ENCODE measurements at regions of chr15 and their contacts with region 1.

Region 1: DNA sequence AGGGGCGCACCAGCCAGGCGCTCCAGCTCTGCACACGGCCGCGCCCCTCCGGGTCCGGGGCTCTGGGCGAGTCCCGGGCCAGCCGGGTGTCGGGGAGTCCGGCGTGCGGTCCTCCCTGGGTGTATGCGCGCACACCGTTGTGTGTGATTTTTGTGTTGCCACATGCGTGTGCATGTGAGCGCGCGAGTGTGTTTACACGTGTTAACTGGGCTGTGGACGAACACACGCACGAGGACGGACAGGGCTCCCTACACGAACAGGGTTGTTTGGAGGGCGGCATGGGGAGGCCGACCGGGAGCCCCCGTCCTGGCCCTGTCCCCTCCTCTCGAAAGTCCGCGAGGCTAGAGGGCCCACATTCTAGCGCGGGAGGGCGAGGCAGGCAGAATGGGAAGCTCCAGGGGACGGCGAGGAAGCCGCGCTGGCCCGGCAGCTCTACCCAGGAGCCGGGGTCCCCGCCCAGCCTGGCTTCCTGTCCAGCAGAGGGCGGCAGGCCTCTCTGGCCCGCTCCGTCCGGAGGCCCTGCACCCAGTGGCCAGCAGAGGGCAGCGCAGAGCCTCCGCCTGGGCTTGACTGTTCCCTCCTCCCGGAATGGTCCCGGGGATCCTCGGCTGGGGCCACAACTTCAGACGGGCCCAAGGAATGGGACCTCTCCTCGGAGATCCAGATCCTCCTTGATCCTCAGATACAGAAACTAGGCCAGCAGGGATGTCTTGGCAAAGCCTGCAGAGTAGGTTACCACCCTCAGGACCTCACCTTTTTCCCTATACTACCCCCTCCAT is 611 bp upstream of the LINGO1 start:
- DNase-seq: peak; percentile 90 to 95
- ATAC-seq: peak; percentile 70 to 94
- H3K4me3 ChIP-seq: peak overlapping the region; percentile 50
- H3K27ac ChIP-seq: peak overlapping the region; percentile 55 to 88; a peak in 5 of 6 replicates
- H3K4me1 ChIP-seq: peaks cover 10% of the 10 kb centered on the region; the same call in 1 of the 3 replicates
- CTCF ChIP-seq: peak; percentile 100
- EP300 ChIP-seq: no peak
- POLR2A ChIP-seq: no peak; the same call in 1 of the 2 replicates
- RAD21 ChIP-seq: peak; percentile 76 to 86

Region 2: GRCh38 chr15:77607111-77607893 is 26.0 kb before region 1 on chr15:
- CTCF ChIA-PET with region 1: interaction called, 47 read pairs
- POLR2A ChIA-PET with region 1: no interaction called
- DNase-seq: no peak
- ATAC-seq: peak; percentile 16 to 46; a peak in 3 of 6 replicates
- H3K4me3 ChIP-seq: no peak overlapping the region
- H3K27ac ChIP-seq: no peak overlapping the region
- H3K4me1 ChIP-seq: peaks cover 8% of the 10 kb centered on the region; the same call in 2 of the 3 replicates
- CTCF ChIP-seq: no peak
- EP300 ChIP-seq: no peak
- POLR2A ChIP-seq: no peak
- RAD21 ChIP-seq: no peak

Region 3: DNA sequence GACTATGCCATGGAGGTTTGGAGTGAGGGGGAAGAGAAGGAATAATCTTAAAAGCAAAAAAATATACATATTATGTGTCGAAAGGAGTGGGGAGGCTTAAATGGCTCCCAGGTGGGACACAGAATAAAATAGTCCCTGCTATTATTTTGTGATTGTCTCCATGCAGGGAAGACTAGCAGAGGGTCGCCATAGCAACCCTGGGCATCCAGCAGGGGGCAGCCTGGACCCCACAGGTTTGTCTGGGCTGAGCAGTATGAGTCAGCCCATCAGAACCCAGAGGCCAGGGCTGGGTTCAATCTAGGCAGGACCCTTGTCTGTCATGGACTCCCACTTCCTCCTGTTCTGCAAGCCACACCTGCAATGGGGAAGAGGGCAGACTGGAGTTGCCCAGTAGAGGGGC is 16.9 kb after region 1 on chr15:
- CTCF ChIA-PET with region 1: interaction called, 181 read pairs
- POLR2A ChIA-PET with region 1: no interaction called
- DNase-seq: peak; percentile 41 to 46
- ATAC-seq: peak; percentile 41 to 79; a peak in 3 of 6 replicates
- H3K4me3 ChIP-seq: no peak overlapping the region
- H3K27ac ChIP-seq: no peak overlapping the region
- H3K4me1 ChIP-seq: no peaks in the 10 kb centered on the region
- CTCF ChIP-seq: peak; percentile 44
- EP300 ChIP-seq: no peak
- POLR2A ChIP-seq: no peak
- RAD21 ChIP-seq: peak; percentile 21 to 22; a peak in 1 of 5 replicates

Region 4: DNA sequence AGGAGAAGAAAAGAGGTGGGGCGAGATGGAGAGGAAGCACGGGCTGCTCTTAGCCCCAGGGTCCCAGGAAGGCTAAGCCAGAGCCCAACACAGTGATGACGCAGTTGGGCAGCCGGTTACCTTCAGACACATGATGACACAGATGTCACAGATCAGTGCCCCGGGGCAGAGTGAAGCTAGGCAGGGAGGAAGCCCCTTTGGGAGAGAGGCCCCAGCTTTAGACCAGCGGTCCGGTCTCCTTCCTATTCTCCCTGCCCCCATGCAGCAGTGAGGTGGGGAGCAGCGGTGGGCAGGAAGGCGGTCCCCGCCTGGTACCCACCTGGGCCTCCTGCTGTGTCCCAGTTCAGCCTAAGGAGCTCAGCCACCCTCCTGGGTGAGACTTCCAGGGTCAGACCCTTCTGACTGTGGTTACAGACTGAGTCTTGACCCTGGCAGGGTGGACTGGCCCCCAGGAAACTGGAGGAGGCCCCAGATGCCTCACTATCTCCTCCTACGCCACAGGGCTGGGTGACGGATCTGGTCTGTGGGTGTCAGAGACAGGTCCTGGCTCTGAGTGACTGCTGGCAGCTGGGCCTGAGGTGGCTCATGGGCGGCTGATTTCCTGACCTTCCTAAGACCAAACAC is 38.2 kb after region 1 on chr15:
- CTCF ChIA-PET with region 1: interaction called, 181 read pairs
- POLR2A ChIA-PET with region 1: no interaction called
- DNase-seq: no peak
- ATAC-seq: no peak
- H3K4me3 ChIP-seq: no peak overlapping the region
- H3K27ac ChIP-seq: no peak overlapping the region
- H3K4me1 ChIP-seq: no peaks in the 10 kb centered on the region
- CTCF ChIP-seq: no peak
- EP300 ChIP-seq: no peak
- POLR2A ChIP-seq: no peak
- RAD21 ChIP-seq: no peak

Region 5: GRCh38 chr15:77784395-77785292 is 151.3 kb after region 1 on chr15:
- CTCF ChIA-PET with region 1: interaction called, 24 read pairs
- POLR2A ChIA-PET with region 1: no interaction called
- DNase-seq: peak; percentile 64 to 84
- ATAC-seq: peak; percentile 58 to 91; a peak in 5 of 6 replicates
- H3K4me3 ChIP-seq: no peak overlapping the region
- H3K27ac ChIP-seq: no peak overlapping the region
- H3K4me1 ChIP-seq: no peaks in the 10 kb centered on the region
- CTCF ChIP-seq: peak; percentile 63
- EP300 ChIP-seq: no peak
- POLR2A ChIP-seq: no peak
- RAD21 ChIP-seq: peak; percentile 32 to 61; a peak in 3 of 5 replicates

Region 6: GRCh38 chr15:77836121-77836692 is 202.9 kb after region 1 on chr15:
- CTCF ChIA-PET with region 1: interaction called, 10 read pairs
- POLR2A ChIA-PET with region 1: no interaction called
- DNase-seq: peak; percentile 33 to 72
- ATAC-seq: peak in 1 of 2 experiments; percentile 76; a peak in 3 of 6 replicates
- H3K4me3 ChIP-seq: no peak overlapping the region
- H3K27ac ChIP-seq: no peak overlapping the region
- H3K4me1 ChIP-seq: peaks cover 8% of the 10 kb centered on the region
- CTCF ChIP-seq: no peak
- EP300 ChIP-seq: no peak
- POLR2A ChIP-seq: no peak
- RAD21 ChIP-seq: no peak